ENCODE measurements at regions of chr1 and their contacts with region 1.

Region 1: GRCh38 chr1:15788624-15789301 is 18.7 kb downstream of the UQCRHL start:
- DNase-seq: peak; percentile 53
- H3K4me3 ChIP-seq: no peak overlapping the region
- H3K27ac ChIP-seq: no peak overlapping the region
- H3K4me1 ChIP-seq: no peaks in the 10 kb centered on the region
- H3K27me3 ChIP-seq: no peaks in the 10 kb centered on the region
- CTCF ChIP-seq: no peak
- POLR2A ChIP-seq: no peak

Region 2: DNA sequence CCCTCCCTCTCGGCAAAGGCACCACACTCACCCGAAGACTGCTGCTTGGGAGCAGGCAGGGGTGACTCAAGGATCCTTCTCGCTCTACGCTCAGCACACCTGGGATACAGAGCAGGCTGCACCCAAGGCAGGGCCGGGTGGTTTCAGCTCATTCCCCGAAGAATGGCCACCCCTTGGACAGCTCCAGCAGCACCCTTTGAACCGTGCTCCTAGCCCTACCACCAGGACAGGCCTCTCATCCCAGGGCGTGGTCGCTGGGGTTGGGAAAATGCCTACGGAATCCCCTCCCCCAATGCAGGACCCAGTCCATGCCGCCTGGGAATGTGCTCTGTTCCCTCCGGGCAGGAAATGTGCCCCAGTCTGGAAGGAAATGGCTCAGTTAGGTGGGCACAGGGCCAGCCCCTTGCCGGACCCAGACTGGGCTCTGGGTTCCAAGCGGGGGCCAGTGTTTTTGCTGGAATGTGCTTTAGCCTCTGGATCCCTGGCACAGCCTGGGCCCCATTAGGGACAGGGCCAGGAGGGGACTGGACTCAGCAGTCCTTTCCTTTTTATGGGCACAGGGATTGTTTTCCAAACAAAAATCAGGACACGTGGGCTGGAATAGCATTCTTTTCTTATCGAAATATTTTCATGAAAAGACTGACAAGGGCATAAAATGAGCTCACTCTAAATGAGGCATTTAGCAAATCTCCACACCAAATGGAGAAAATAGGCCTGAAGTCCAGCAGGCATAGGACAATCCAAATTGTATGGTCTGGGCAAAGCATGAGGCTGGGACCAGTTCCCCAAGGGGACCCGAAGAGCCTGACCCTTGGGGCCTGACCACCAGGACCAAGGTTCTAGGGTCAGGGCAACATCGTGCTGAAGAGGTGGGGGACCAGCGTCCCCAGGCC is 39.1 kb before region 1 on chr1:
- CTCF ChIA-PET with region 1: no interaction called
- POLR2A ChIA-PET with region 1: no interaction called
- dilution Hi-C with region 1: no loop called
- intact Hi-C with region 1: no loop called
- DNase-seq: peak; percentile 92
- H3K4me3 ChIP-seq: peak overlapping the region in 2 of 3 experiments; percentile 26 to 74
- H3K27ac ChIP-seq: peak overlapping the region; percentile 97
- H3K4me1 ChIP-seq: peaks cover 35% of the 10 kb centered on the region
- H3K27me3 ChIP-seq: no peaks in the 10 kb centered on the region
- CTCF ChIP-seq: no peak
- POLR2A ChIP-seq: peak; percentile 63

Region 3: DNA sequence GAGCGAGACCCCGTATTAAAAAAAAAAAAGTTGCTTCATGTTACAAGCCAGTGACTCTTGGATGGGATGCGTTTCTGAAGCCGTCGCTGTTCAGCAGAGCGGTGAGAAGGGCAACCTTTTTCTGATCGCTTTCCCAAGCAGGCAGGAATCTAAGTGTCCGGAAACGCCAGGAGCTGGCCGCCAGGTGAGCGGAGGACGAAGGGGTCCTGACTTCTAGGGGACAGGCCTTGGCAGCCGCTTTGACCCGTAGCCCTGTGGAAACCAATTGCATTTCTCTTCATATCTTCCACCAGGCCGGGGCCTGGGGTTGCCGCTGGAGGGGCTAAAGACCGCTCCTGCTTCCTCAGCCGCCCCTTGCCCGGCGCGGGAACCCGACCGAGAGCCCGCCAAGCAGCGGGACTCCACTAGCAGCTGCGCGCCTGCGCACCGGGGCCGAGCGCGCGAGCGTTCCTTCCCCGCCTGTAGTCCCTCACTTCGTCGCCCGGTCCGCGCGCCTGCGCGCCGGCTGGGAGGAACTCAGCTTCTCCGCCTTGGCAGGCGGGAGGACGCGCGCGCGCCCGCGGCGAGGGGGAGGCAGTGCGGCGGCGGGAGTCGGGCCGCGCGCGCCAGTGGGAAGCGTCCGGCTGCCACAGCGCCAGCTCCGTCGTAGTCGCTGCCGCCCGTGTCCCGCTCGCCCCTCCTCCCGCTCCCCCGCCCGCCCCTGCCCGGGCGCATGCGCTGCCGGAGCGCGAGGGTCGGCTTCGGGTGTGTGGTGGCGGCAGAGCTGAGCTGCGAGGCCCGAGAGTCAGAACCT is 58.5 kb after region 1 on chr1 and contains the start of gene SPEN:
- CTCF ChIA-PET with region 1: interaction called, 13 read pairs
- POLR2A ChIA-PET with region 1: interaction called, 3 read pairs
- dilution Hi-C with region 1: no loop called
- intact Hi-C with region 1: no loop called
- DNase-seq: peak; percentile 97
- H3K4me3 ChIP-seq: peak within 1 kb of the TSS; percentile 71 to 100 (median 99)
- H3K27ac ChIP-seq: peak within 1 kb of the TSS; percentile 62
- H3K4me1 ChIP-seq: peaks cover 25% of the 10 kb centered on the region
- H3K27me3 ChIP-seq: no peaks in the 10 kb centered on the region
- CTCF ChIP-seq: no peak
- POLR2A ChIP-seq: peak; percentile 54
- total RNA-seq, gene SPEN: 40.3 and 44.4 TPM in 2 replicates

Region 4: DNA sequence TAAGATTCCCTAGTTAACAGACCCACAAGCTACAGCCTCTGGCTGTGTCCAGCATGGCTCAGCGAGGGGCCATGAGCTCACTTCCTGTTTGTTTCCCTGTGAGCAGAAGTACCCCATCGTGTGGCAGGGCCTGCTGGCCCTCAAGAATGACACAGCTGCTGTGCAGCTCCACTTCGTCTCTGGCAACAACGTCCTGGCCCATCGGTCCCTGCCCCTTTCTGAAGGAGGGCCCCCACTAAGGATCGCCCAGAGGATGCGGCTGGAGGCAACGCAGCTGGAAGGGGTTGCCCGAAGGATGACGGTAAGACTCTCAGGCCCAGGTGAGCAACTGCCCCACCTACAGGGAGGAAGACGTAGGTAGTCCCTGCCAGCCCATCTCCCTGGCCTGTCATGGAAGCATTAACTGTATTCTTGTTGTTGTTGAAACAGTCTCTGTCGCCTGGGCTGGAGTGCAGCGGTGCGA is 149.0 kb after region 1 on chr1:
- CTCF ChIA-PET with region 1: interaction called, 16 read pairs
- POLR2A ChIA-PET with region 1: no interaction called
- dilution Hi-C with region 1: no loop called
- intact Hi-C with region 1: loop called (anchors 1 kb)
- DNase-seq: peak; percentile 75
- H3K4me3 ChIP-seq: no peak overlapping the region
- H3K27ac ChIP-seq: peak overlapping the region; percentile 72
- H3K4me1 ChIP-seq: peaks cover 26% of the 10 kb centered on the region
- H3K27me3 ChIP-seq: no peaks in the 10 kb centered on the region
- CTCF ChIP-seq: peak in 1 of 2 donors; percentile 46
- POLR2A ChIP-seq: no peak

Region 5: DNA sequence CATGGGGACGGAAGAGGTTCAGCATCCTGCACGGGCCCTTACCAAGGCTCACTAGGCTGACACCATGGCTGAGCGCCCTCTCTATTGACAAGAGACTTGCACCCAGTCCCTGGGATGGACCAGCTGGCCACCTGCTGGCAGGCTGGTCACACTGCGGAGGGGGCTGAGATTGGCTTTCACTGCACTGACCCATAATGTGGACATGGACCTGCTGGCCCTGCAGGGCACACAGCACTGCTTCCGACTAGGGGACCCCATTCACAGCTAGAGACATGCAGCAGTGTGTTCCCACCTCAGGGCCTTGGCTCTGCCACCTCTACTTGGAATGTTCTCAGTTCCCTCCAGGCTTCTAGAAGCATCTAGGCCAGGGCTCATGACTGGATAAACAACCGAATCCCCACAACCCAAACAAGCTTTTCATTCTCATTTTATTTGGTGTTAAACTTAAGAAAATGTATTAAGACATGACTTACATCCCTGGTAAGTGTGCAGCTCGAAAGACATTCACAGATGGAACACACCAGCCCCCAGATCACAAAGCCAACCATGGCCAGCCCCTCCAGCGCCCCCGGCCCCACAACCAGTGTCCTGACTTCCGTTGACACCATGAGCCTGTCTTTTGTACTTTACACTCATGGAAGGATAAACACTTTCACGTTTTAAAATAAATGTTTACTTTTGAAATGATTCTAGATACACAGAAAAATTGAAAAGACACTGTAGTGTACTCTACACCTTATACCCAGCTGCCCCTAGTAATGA is 206.0 kb after region 1 on chr1:
- CTCF ChIA-PET with region 1: interaction called, 34 read pairs
- POLR2A ChIA-PET with region 1: no interaction called
- dilution Hi-C with region 1: no loop called
- intact Hi-C with region 1: loop called (anchors 1 kb)
- DNase-seq: peak; percentile 71
- H3K4me3 ChIP-seq: no peak overlapping the region
- H3K27ac ChIP-seq: no peak overlapping the region
- H3K4me1 ChIP-seq: no peaks in the 10 kb centered on the region
- H3K27me3 ChIP-seq: peaks cover 0 to 2% of the 10 kb centered on the region in 2 experiments
- CTCF ChIP-seq: peak; percentile 88 to 96
- POLR2A ChIP-seq: no peak

Region 6: DNA sequence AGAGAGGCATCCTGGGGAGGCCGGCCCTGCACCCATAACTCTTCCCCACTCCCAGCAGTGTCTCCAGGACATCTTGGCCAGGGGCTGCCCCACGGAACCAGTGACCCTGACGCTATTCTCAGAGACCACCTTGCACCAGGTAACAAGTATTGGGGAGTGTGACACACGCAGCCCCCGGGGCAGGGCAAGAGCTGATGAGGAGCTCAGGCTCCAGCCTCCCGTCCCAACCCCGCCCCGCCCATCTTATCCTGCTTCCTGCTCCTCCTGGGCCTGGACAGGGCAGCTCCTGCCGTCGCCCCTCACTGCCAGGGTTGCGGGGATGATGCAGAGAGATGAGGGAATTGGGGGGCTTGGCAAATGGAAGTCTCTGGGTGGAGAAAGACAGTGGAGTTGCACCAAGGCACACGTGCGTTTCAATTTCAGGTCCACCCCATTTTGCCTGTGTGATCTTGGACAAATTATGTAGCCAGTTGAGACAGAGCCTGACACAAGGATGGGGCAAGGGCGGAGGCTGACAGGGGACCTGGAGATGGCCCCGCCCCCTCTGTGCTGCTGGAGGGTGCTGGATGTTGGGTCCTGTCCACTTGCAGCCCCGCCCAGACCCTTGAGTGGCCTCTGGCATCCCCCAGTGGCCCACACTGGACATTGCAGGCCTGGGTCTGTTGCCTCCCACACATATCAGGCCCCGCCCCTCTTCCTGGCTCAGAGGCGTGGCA is 243.8 kb after region 1 on chr1:
- CTCF ChIA-PET with region 1: interaction called, 15 read pairs
- POLR2A ChIA-PET with region 1: no interaction called
- dilution Hi-C with region 1: no loop called
- intact Hi-C with region 1: loop called (anchors 1 kb)
- DNase-seq: peak; percentile 88
- H3K4me3 ChIP-seq: no peak overlapping the region
- H3K27ac ChIP-seq: no peak overlapping the region
- H3K4me1 ChIP-seq: no peaks in the 10 kb centered on the region
- H3K27me3 ChIP-seq: no peaks in the 10 kb centered on the region
- CTCF ChIP-seq: peak; percentile 86 to 94
- POLR2A ChIP-seq: no peak

Measured in endothelial cell of umbilical vein (primary cell).